Activated CD8-positive, alpha-beta T cell treated with anti-CD3 and anti-CD28 coated beads for 36 hours (primary cell): ENCODE measurements at regions of chr4 and their contacts with region 1.

Region 1: DNA sequence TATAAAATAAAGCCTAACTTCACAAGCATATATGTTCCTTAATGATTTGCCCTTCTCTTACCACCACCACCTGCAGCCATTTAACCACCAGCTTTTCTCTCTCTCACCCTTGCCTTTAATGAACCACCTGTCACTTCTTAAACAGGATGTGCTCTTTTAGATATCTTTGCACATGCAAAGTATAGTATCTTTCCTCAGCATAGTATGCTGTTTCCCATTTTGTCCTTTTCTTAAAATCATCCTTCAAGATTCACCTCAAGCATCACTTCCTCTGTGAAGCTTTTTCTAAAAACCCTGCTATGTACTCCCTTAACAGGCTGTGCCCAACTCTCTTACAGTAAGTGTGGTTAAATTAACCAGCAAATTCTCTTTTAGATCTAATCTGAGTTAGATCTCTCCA is 8.2 kb upstream of the CNOT6L start:
- DNase-seq: peak; percentile 27
- ATAC-seq: peak; percentile 85
- H3K4me3 Mint-ChIP-seq: no peak overlapping the region
- H3K27ac Mint-ChIP-seq: peak overlapping the region; percentile 88
- H3K4me1 Mint-ChIP-seq: peaks cover 47% of the 10 kb centered on the region
- H3K27me3 Mint-ChIP-seq: no peaks in the 10 kb centered on the region
- CTCF ChIP-seq: no peak

Region 2: DNA sequence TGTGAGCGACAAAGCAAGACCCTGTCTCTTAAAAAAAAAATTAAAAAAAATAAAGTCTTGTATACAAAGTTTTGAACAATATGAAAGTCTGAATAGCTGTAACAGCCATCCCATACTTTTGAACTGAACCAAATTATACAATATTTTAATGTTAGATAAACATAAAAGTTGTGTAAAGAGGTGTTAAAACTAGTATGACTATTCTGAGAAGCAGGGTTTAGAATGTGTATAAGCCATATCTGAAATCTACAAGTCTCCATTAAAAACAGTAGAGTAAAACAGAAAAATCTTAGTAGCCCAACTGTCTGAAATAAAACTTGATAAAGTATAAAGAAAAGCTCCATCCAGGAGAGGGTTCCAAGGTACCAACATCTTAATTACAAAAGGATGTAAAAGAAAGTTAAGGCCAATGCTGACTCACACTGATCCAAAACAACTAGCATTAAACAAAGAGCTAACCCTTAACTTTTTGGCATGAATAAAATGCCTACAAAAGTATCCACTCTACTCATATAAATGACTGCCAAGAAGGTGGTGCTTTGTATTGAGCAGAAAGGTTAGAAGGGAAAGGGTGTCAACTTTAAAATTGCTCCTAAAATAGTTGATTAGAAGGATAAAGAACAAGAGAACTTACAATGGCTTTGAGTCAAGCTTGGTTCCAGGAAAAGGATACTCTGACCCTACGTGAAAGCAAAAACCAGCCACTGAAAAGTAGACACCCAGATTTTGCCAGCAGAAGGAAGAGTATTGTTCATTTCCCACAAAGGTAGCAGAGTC is 26.7 kb before region 1 on chr4:
- CTCF ChIA-PET with region 1: no interaction called
- POLR2A ChIA-PET with region 1: no interaction called
- intact Hi-C with region 1: no loop called
- DNase-seq: no peak
- ATAC-seq: peak; percentile 69
- H3K4me3 Mint-ChIP-seq: peak overlapping the region; percentile 65
- H3K27ac Mint-ChIP-seq: peak overlapping the region; percentile 90
- H3K4me1 Mint-ChIP-seq: peaks cover 71% of the 10 kb centered on the region
- H3K27me3 Mint-ChIP-seq: no peaks in the 10 kb centered on the region
- CTCF ChIP-seq: no peak

Region 3: DNA sequence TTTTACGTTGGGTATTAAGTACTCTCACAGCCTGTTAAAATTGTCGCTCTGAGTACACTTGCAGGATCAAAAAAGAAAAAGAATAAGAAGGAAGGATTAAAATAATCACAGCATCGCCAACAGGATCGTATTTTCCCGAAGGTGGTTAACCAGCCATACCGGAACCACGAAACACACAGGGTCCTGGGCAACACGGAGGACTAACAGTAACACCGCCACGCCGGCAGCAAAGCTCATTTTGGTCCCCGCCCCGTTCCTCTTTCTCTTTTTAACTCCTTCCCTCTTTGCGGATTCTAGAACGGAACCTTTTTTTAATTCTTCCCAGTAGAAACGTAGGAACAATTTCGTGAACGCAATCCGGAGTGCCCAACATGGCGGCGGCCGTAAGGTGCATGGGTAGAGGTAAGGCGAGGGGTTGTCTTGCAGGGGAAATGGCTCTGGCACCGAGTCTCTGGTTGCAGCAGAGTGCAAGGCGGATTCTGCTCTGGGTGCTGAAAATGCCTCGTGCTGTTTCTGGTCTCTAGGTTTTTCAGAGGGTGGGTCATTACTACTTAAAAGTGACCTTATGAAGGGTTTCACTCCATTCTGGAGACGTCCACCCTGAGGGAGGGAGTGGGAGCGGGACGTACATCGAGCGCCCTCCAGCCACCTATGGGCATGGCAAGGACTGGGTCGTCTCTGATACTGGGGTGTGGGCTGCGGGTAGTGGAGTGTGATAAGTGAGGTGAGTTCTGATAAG is 35.3 kb after region 1 on chr4 and contains the start of gene MRPL1:
- CTCF ChIA-PET with region 1: interaction called, 3 read pairs
- POLR2A ChIA-PET with region 1: interaction called, 192 read pairs
- intact Hi-C with region 1: no loop called
- DNase-seq: peak; percentile 92
- ATAC-seq: peak; percentile 79
- H3K4me3 Mint-ChIP-seq: peak within 1 kb of the TSS; percentile 99
- H3K27ac Mint-ChIP-seq: peak within 1 kb of the TSS; percentile 100
- H3K4me1 Mint-ChIP-seq: peaks cover 55% of the 10 kb centered on the region
- H3K27me3 Mint-ChIP-seq: peaks cover 3% of the 10 kb centered on the region
- CTCF ChIP-seq: peak; percentile 40
- total RNA-seq, gene MRPL1: 55.7 to 62.4 TPM